ENCODE measurements at regions of chr17 and their contacts with region 1.

Region 1: DNA sequence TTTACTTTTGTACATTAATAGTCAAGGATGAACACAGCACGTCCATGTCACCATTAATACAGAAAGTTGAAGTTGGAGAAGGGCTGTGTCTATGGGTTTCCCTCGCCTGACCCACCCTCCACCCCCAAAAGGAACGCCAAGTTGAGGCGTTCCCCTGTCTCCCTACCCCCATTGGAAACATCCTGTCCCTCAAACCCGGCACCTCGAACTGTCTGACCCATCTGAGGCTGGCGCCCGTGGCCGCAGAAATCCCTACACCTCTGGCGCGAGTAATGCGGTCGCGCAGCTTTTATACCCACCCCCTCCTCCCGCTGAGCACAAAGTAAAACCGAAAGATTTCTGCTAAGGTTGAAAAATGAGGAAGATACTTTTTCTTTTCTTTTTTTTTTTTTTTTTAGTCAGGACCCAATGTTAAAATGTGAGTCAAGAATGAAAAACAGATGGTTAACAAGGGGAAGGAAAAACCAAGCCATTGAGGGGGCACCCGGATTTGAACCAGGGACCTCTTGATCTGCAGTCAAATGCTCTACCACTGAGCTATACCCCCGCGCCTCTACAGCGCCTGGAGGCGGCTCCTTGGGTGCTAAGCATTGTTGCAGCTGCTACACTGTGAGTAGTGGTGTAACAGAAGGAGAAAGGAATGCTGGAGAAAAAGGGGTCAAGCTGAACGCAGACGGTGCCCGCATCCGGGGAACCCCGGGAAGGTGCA is 887 bp upstream of the LASP1 start:
- DNase-seq: peak; percentile 85
- H3K4me3 ChIP-seq: peak overlapping the region; percentile 84 to 93
- H3K27ac ChIP-seq: peak overlapping the region; percentile 97
- H3K4me1 ChIP-seq: peaks cover 15% of the 10 kb centered on the region
- H3K27me3 ChIP-seq: no peaks in the 10 kb centered on the region
- CTCF ChIP-seq: no peak
- POLR2A ChIP-seq: no peak

Region 2: GRCh38 chr17:38925263-38925995 is 56.5 kb after region 1 on chr17 and contains the start of gene LASP1NB:
- intact Hi-C with region 1: loop called (anchors 5 kb)
- DNase-seq: no peak
- H3K4me3 ChIP-seq: no peak within 1 kb of the TSS
- H3K27ac ChIP-seq: no peak within 1 kb of the TSS
- H3K4me1 ChIP-seq: no peaks in the 10 kb centered on the region
- H3K27me3 ChIP-seq: no peaks in the 10 kb centered on the region
- CTCF ChIP-seq: no peak
- POLR2A ChIP-seq: no peak

Region 3: GRCh38 chr17:38947189-38947588 is 78.2 kb after region 1 on chr17:
- intact Hi-C with region 1: no loop called
- DNase-seq: no peak
- H3K4me3 ChIP-seq: no peak overlapping the region
- H3K27ac ChIP-seq: no peak overlapping the region
- H3K4me1 ChIP-seq: no peaks in the 10 kb centered on the region
- H3K27me3 ChIP-seq: no peaks in the 10 kb centered on the region
- CTCF ChIP-seq: no peak
- POLR2A ChIP-seq: no peak

Region 4: DNA sequence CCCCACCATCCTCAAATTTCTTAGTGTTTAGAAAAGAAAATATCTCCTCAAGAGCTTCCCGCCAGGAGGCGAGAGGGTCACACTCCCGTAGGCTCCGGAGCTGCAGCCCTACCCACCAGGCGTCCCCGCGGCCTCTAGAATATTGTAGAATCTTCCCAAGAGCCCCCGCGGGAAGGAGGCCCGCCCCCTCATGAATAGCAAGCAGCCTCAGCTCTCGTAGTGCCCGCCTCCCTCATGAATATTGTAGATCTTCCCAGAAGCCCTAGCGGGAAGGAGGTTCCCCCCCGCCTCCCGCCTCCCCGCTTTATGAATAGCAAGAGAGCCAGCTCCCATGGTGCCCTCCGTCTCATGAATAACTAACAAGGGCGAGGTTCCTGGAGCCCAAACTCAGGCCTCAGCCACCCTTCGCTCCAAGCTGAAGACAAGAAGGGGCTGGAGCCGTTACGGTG is 98.3 kb after region 1 on chr17 and contains the start of gene FBXO47:
- intact Hi-C with region 1: loop called (anchors 5 kb)
- DNase-seq: peak; percentile 87
- H3K4me3 ChIP-seq: peak within 1 kb of the TSS; percentile 7 to 14
- H3K27ac ChIP-seq: peak within 1 kb of the TSS; percentile 62 to 64
- H3K4me1 ChIP-seq: no peaks in the 10 kb centered on the region
- H3K27me3 ChIP-seq: no peaks in the 10 kb centered on the region
- CTCF ChIP-seq: peak in 2 of 4 experiments; percentile 22 to 23
- POLR2A ChIP-seq: peak; percentile 27
- total RNA-seq, gene FBXO47: 5.1 TPM in 1 of 2 donors, not detected in the other

Region 5: DNA sequence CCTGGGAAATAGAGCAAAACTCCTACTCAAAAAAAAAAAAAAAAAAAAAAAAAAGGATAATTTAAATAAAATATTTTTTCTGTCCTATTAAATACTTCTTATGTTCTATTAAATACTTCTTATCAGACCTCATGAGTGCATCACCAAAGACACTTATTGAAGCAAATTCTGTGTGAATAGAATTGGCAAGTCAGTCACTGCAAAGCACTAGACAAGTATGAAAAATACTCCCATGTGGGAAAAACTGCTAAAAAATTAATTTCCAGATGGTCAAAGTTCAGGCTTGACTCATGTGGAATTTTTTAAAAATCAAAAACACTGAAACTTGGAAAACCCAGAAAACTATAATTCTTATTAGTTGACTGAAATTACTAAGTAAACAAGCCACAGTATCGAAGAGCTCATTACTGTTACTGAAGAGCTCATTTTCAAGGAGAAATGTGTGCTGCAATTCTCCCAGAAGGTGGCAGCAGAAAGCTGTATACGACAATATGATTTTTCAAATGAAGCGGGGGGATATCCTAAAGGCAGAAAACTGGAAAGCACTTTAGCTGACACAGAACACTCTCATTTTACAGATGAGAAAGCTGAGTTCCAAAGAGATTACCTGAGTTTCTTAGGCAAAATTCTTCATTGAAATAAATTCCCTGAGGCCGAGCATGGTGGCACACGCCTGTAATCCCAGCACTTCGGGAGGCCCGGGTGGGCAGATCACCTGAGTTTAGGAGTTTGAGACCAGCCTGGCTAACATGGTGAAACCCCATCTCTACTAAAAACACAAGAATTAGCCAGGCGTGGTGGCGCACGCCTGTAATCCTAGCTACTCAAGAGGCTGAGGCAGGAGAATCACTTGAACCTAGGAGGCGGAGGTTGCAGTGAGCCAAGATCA is 114.1 kb after region 1 on chr17:
- intact Hi-C with region 1: loop called (anchors 5 kb)
- DNase-seq: peak; percentile 43
- H3K4me3 ChIP-seq: no peak overlapping the region
- H3K27ac ChIP-seq: no peak overlapping the region
- H3K4me1 ChIP-seq: no peaks in the 10 kb centered on the region
- H3K27me3 ChIP-seq: no peaks in the 10 kb centered on the region
- CTCF ChIP-seq: peak; percentile 58 to 85 (median 70)
- POLR2A ChIP-seq: no peak